Activated B cell treated with CpG ODN at 0.5 μM for 24 hours (primary cell): ENCODE measurements at regions of chr5 and their contacts with region 1.

Region 1: GRCh38 chr5:17282283-17283120 is 65.1 kb downstream of the BASP1 start:
- DNase-seq: peak; percentile 52
- ATAC-seq: peak; percentile 76
- H3K4me3 Mint-ChIP-seq: peak overlapping the region; percentile 81
- H3K27ac Mint-ChIP-seq: peak overlapping the region; percentile 95
- H3K4me1 Mint-ChIP-seq: peaks cover 71% of the 10 kb centered on the region
- H3K27me3 Mint-ChIP-seq: no peaks in the 10 kb centered on the region
- CTCF ChIP-seq: no peak

Region 2: DNA sequence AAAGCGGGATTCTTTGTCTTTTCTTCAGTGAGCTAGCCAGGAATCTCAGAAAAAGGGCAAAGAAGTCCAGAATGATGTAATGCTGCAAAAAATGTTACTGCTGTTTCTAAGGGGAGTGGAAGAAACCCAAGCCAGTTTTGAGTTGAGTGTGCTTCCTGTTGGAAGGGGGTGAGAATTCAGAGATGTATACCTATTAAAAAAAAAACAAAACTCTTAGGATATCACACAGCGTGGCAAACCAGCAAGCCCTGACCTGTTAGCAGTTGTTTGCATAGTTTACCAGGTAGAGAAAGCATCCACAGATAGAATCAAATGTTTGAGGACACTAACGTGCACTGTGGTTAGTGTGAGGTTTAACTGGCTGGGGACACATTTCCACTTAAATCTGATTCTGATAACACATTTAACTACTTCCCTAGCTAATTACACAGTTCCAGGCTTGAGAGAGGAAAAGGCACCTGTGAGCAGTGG is 53.6 kb before region 1 on chr5:
- CTCF ChIA-PET with region 1: no interaction called
- POLR2A ChIA-PET with region 1: interaction called, 21 read pairs
- intact Hi-C with region 1: loop called (anchors 1 kb)
- DNase-seq: no peak
- ATAC-seq: peak; percentile 13
- H3K4me3 Mint-ChIP-seq: peak overlapping the region; percentile 63
- H3K27ac Mint-ChIP-seq: peak overlapping the region; percentile 92
- H3K4me1 Mint-ChIP-seq: peaks cover 92% of the 10 kb centered on the region
- H3K27me3 Mint-ChIP-seq: no peaks in the 10 kb centered on the region
- CTCF ChIP-seq: no peak

Region 3: DNA sequence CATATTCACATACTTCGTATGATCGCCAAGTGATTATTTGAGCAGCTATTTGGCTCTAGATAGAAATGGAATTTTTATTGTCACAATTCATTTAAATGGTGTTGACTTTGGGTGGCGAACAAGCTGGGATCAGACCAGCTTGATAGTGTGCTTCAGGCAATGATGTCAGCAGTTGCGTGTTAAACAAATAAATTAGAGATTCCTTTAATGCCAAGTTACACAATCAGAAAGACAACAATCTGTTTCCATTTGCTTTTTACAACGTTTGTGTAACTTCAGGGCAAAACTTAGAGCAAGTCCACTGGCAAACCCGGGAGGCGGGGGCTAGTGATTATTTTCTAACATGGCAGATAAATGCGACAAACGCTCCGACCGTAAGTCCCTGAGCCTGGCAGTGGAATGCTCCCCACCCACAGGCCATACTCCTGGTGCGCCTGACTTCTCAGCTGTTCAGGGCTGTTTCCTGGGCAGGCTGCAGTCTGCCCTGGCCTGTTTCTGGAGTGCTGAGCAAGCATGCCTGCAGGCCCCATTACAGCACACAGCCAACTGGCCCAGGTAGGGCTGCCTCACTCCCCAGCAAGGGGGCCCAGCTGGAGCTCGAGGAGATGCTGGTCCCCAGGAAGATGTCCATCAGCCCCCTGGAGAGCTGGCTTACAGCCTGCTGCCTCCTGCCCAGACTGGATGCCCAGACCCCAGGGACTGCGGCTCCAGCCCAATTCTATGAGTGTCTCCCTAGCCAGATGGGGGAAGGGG is 23.6 kb after region 1 on chr5:
- CTCF ChIA-PET with region 1: no interaction called
- POLR2A ChIA-PET with region 1: no interaction called
- intact Hi-C with region 1: loop called (anchors 2 kb)
- DNase-seq: no peak
- ATAC-seq: no peak
- H3K4me3 Mint-ChIP-seq: no peak overlapping the region
- H3K27ac Mint-ChIP-seq: no peak overlapping the region
- H3K4me1 Mint-ChIP-seq: no peaks in the 10 kb centered on the region
- H3K27me3 Mint-ChIP-seq: no peaks in the 10 kb centered on the region
- CTCF ChIP-seq: no peak

Region 4: GRCh38 chr5:17359451-17360011 is 77.0 kb after region 1 on chr5:
- CTCF ChIA-PET with region 1: interaction called, 6 read pairs
- POLR2A ChIA-PET with region 1: interaction called, 21 read pairs
- intact Hi-C with region 1: loop called (anchors 1 kb)
- DNase-seq: no peak
- ATAC-seq: no peak
- H3K4me3 Mint-ChIP-seq: no peak overlapping the region
- H3K27ac Mint-ChIP-seq: no peak overlapping the region
- H3K4me1 Mint-ChIP-seq: peaks cover 18% of the 10 kb centered on the region
- H3K27me3 Mint-ChIP-seq: no peaks in the 10 kb centered on the region
- CTCF ChIP-seq: no peak

Region 5: GRCh38 chr5:17436761-17437221 is 154.3 kb after region 1 on chr5:
- CTCF ChIA-PET with region 1: no interaction called
- POLR2A ChIA-PET with region 1: no interaction called
- intact Hi-C with region 1: loop called (anchors 1 kb)
- DNase-seq: no peak
- ATAC-seq: peak; percentile 82
- H3K4me3 Mint-ChIP-seq: peak overlapping the region; percentile 79
- H3K27ac Mint-ChIP-seq: peak overlapping the region; percentile 82
- H3K4me1 Mint-ChIP-seq: peaks cover 27% of the 10 kb centered on the region
- H3K27me3 Mint-ChIP-seq: no peaks in the 10 kb centered on the region
- CTCF ChIP-seq: no peak